Calu3 (cell line): ENCODE measurements at regions of chr12 and their contacts with region 1.

Region 1: DNA sequence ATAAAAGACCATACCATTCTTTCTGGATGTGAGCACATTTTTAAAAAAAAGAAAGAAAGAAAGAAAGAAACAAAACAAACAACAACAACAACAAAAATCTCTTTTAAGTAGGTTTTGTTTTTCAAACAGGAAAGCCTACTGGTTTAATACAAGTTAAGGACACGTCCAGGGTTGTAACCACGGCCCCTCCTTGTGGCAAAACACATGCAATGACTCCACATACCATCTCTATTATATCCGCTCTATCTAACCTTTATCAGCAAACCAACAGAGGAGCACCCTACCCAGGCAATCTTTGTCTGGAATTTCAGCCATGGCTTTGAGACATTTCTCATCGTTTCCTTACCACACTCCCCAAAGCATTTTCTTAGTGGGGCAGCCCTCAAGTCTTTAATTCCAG is 360.5 kb upstream of the TMPO start:
- DNase-seq: peak; percentile 61
- H3K4me3 Mint-ChIP-seq: no peak overlapping the region
- H3K27ac Mint-ChIP-seq: no peak overlapping the region
- H3K4me1 Mint-ChIP-seq: peaks cover 8% of the 10 kb centered on the region
- H3K27me3 Mint-ChIP-seq: no peaks in the 10 kb centered on the region
- CTCF ChIP-seq: peak; percentile 44

Region 2: DNA sequence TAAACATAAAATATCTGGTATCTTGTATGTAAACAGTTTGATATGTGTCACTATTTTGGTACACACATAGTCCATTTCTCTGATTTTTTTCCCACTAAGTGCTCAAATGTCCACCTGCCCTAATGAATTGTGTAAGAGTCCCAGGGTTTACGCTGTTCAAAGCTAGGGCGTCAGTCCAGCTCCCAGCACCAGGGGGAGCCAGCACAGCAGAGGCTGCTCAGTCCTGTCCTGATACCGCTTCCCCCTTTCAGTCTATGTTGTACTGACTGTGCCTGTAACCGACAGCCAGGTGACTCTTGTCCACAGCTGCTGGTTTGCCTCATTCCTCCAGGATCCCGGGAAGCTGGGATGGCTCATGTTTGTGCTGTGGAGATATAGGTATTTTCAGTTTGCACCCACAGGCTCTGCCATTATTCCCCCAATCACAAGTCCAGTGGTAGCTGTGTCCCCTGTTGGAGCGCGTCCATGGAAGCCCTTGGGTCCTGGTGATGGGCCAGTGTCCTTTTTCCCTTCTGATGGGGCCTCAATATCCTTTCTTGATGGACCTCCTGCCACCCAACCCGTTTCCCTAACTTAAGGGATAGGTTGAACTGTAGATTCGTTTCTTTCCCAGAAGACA is 1005.8 kb before region 1 on chr12:
- CTCF ChIA-PET with region 1: interaction called, 5 read pairs
- intact Hi-C with region 1: loop called (anchors 1 kb)
- DNase-seq: peak; percentile 87
- H3K4me3 Mint-ChIP-seq: no peak overlapping the region
- H3K27ac Mint-ChIP-seq: no peak overlapping the region
- H3K4me1 Mint-ChIP-seq: no peaks in the 10 kb centered on the region
- H3K27me3 Mint-ChIP-seq: peaks cover 22% of the 10 kb centered on the region
- CTCF ChIP-seq: peak; percentile 81

Region 3: GRCh38 chr12:97556302-97556798 is 598.5 kb before region 1 on chr12:
- CTCF ChIA-PET with region 1: no interaction called
- intact Hi-C with region 1: loop called (anchors 10 kb)
- DNase-seq: peak; percentile 44
- H3K4me3 Mint-ChIP-seq: no peak overlapping the region
- H3K27ac Mint-ChIP-seq: no peak overlapping the region
- H3K4me1 Mint-ChIP-seq: peaks cover 35% of the 10 kb centered on the region
- H3K27me3 Mint-ChIP-seq: no peaks in the 10 kb centered on the region
- CTCF ChIP-seq: no peak

Region 4: GRCh38 chr12:98002712-98003493 is 151.9 kb before region 1 on chr12:
- CTCF ChIA-PET with region 1: no interaction called
- intact Hi-C with region 1: loop called (anchors 2 kb)
- DNase-seq: peak; percentile 72
- H3K4me3 Mint-ChIP-seq: no peak overlapping the region
- H3K27ac Mint-ChIP-seq: no peak overlapping the region
- H3K4me1 Mint-ChIP-seq: peaks cover 9% of the 10 kb centered on the region
- H3K27me3 Mint-ChIP-seq: no peaks in the 10 kb centered on the region
- CTCF ChIP-seq: peak; percentile 61

Region 5: GRCh38 chr12:98042668-98043067 is 112.2 kb before region 1 on chr12:
- CTCF ChIA-PET with region 1: no interaction called
- intact Hi-C with region 1: no loop called
- DNase-seq: no peak
- H3K4me3 Mint-ChIP-seq: no peak overlapping the region
- H3K27ac Mint-ChIP-seq: no peak overlapping the region
- H3K4me1 Mint-ChIP-seq: no peaks in the 10 kb centered on the region
- H3K27me3 Mint-ChIP-seq: no peaks in the 10 kb centered on the region
- CTCF ChIP-seq: no peak